ENCODE measurements at regions of chr14 and their contacts with region 1.

Region 1: GRCh38 chr14:50532502-50533240 is at the start of gene MAP4K5:
- DNase-seq: no peak
- ATAC-seq: peak; percentile 99
- H3K4me3 ChIP-seq: peak within 1 kb of the TSS; percentile 68 to 75
- H3K27ac ChIP-seq: peak within 1 kb of the TSS; percentile 79
- H3K4me1 ChIP-seq: peaks cover 8% of the 10 kb centered on the region; the same call in 1 of the 2 replicates
- H3K27me3 ChIP-seq: no peaks in the 10 kb centered on the region
- CTCF ChIP-seq: peak; percentile 95
- total RNA-seq, gene MAP4K5: 33.1 TPM

Region 2: GRCh38 chr14:50321009-50321660 is 211.5 kb before region 1 on chr14:
- CTCF ChIA-PET with region 1: interaction called, 3 read pairs
- POLR2A ChIA-PET with region 1: no interaction called
- in situ Hi-C with region 1: no loop called
- intact Hi-C with region 1: loop called (anchors 2 kb)
- DNase-seq: peak; percentile 87
- ATAC-seq: peak; percentile 99
- H3K4me3 ChIP-seq: peak overlapping the region; percentile 16 to 38; a peak in 3 of 4 replicates
- H3K27ac ChIP-seq: peak overlapping the region; percentile 59
- H3K4me1 ChIP-seq: peaks cover 8% of the 10 kb centered on the region
- H3K27me3 ChIP-seq: no peaks in the 10 kb centered on the region
- CTCF ChIP-seq: peak; percentile 87

Region 3: GRCh38 chr14:50396631-50397390 is 135.9 kb before region 1 on chr14 and contains the start of gene CDKL1:
- CTCF ChIA-PET with region 1: no interaction called
- POLR2A ChIA-PET with region 1: no interaction called
- in situ Hi-C with region 1: no loop called
- intact Hi-C with region 1: loop called (anchors 5 kb)
- DNase-seq: peak; percentile 12
- ATAC-seq: peak; percentile 95
- H3K4me3 ChIP-seq: peak within 1 kb of the TSS; percentile 68 to 93
- H3K27ac ChIP-seq: peak within 1 kb of the TSS; percentile 81
- H3K4me1 ChIP-seq: peaks cover 19% of the 10 kb centered on the region
- H3K27me3 ChIP-seq: no peaks in the 10 kb centered on the region
- CTCF ChIP-seq: no peak
- total RNA-seq, gene CDKL1: 5.8 TPM

Region 4: DNA sequence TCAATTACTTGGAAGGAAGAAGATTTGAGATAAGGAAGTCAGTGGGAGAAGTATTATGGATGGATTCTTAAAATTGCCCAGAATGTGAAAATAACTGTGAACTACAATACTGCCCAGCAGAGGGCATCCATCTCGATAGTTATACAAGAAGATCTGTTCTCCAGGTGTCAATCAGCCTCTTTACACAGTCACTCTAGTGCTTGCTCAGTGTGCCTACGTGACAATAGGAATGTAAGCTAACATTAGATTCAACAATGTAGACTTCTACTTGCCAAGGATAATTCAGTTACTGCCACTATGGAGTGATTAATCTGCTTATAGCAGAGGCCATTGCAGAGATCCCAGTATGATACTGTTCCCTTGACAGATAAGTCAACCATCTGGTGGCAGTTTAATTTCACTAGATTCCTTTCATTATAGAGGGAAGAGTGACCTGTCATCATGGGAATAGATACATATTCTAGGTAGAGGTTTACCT is 10.3 kb after region 1 on chr14:
- CTCF ChIA-PET with region 1: no interaction called
- POLR2A ChIA-PET with region 1: interaction called, 21 read pairs
- in situ Hi-C with region 1: no loop called
- intact Hi-C with region 1: no loop called
- DNase-seq: no peak
- ATAC-seq: peak; percentile 73
- H3K4me3 ChIP-seq: no peak overlapping the region
- H3K27ac ChIP-seq: no peak overlapping the region
- H3K4me1 ChIP-seq: no peaks in the 10 kb centered on the region
- H3K27me3 ChIP-seq: no peaks in the 10 kb centered on the region
- CTCF ChIP-seq: peak; percentile 49

Measured in Panc1 (cell line).